ENCODE measurements at regions of chr1 and their contacts with region 1.

Region 1: DNA sequence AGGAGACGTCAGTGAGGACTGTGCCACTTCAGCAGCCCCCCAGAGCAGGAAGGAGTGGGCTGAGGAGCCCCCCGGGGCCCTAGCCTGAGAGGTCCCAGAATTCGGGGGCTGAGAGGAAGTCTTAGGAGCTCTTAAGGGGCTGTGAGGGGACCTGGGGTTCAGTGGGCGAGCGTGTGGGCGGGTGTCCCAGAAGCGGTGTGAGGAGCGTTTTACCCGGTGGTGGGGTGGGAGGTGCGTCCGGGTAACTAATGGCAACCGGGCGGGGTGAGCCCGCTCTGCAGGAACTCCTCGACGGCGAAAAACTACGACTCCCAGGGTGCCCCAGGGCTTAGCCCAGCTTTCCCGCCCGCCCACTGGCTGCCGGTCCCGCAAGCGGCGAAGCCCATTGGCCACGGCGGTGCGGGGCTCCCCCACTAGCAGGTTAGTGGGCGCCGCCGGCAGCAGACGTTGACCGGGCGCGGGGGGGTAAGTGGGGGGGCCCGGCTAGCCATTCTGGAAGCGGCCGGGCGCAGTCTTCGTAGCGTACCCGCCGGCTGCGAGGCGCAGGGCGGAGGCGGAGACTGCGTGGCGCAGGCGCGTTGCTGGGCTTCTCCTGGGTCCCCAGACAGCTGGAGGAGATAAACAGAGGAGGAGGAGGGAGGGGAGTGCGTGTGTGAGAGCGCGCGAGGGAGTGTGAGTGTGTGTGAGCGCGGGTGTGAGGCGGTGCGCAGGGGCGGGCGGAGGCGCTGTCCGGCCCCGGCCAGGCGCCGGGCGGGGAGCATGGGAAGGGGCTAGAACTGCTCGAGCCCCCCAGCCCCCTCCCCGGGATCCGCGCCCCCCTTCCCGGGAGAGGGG is at the start of gene WDTC1:
- DNase-seq: peak; percentile 99
- H3K4me3 Mint-ChIP-seq: peak within 1 kb of the TSS; percentile 91
- H3K27ac Mint-ChIP-seq: peak within 1 kb of the TSS; percentile 86
- H3K4me1 Mint-ChIP-seq: peaks cover 29% of the 10 kb centered on the region
- H3K27me3 Mint-ChIP-seq: no peaks in the 10 kb centered on the region
- total RNA-seq, gene WDTC1: 30.3 TPM

Region 2: DNA sequence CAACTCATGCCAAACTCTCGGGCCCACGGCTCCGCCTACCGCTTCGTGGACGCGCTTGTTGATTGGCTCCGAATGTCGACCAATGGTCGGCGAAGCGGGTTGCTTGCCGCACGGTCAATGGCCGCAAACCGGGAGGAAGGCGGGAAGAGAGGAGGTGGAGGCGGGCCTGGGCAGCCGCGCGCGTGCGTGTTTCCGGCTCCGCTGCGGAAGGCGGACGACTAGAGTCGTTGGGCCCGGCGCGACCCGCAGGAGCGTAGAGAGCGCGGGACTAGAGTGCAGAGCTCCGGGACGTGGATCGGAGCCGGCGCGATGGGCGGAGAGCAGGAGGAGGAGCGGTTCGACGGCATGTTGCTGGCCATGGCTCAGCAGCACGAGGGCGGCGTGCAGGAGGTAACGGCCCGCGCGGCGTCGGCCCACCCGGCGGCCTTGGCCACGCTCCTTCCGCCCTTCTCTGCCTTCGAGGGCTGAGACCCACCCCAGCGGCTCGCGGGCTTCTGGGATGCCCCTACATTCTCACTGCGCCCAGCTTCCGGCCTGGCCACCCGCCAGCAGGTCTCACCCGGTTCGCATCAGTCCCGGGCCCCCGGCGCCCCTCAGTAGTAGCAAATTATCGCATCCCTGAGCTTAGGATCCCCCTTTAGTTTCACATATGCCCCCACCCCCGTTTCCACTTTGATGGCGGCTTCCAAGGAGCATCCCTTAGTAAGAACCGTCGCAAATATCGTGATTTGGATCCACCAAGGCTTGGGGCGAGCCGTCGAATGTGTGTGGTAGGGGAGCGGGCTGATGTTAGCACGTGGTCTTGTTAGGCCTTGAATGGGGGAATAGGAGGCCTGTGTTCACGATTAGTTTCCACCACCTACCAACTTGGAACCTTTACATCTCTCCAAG is 312.5 kb before region 1 on chr1 and contains the start of gene NUDC:
- CTCF ChIA-PET with region 1: no interaction called
- POLR2A ChIA-PET with region 1: interaction called, 3 read pairs
- intact Hi-C with region 1: loop called (anchors 2 kb)
- DNase-seq: peak; percentile 98
- H3K4me3 Mint-ChIP-seq: peak within 1 kb of the TSS; percentile 98
- H3K27ac Mint-ChIP-seq: peak within 1 kb of the TSS; percentile 93
- H3K4me1 Mint-ChIP-seq: peaks cover 36% of the 10 kb centered on the region
- H3K27me3 Mint-ChIP-seq: no peaks in the 10 kb centered on the region
- total RNA-seq, gene NUDC: 90.8 to 97.1 TPM

Region 3: DNA sequence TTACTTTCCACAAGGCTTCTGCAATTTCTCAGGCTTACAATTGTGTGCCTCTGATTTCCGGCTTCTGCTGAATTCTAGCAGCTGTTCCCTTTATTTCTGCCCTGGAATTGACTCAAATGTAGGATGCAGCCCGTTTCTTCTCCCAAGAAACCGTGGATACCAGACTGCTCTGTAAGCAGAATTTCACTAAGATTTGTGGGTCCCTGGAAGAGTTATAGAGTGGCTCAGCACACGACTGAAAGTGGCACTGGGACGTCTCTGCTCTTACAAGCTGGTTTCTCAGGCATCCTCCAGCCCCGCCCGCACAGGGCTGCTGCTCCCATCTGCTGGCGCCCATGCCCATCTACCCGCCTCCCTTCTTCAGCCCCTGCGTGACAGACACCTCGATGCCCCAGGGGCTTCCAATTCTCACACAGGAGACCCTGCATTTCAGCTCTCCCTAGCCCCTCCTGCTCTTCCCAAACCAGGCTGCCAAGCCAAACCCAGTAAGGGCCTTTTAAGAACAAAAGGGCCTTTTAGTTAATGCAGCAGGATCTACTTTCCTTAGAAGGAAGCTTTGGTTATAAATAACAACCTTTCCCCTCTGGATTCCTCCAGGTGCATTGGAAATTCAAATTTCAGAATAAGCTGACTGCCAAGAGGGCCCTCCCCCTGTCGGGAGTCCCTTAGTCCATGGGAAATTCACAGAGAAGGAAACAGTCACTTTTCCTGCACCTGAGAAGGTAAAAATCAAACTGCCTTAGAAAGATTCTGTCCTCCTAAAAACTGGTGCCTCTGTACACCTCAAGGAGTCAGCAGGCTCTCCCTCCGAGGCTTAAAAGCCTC is 176.3 kb before region 1 on chr1:
- CTCF ChIA-PET with region 1: no interaction called
- POLR2A ChIA-PET with region 1: no interaction called
- intact Hi-C with region 1: no loop called
- DNase-seq: no peak
- H3K4me3 Mint-ChIP-seq: no peak overlapping the region
- H3K27ac Mint-ChIP-seq: no peak overlapping the region
- H3K4me1 Mint-ChIP-seq: no peaks in the 10 kb centered on the region
- H3K27me3 Mint-ChIP-seq: no peaks in the 10 kb centered on the region

Region 4: GRCh38 chr1:27253596-27253995 is 19.3 kb after region 1 on chr1:
- CTCF ChIA-PET with region 1: interaction called, 3 read pairs
- POLR2A ChIA-PET with region 1: interaction called, 4 read pairs
- intact Hi-C with region 1: loop called (anchors 2 kb)
- DNase-seq: no peak
- H3K4me3 Mint-ChIP-seq: peak overlapping the region; percentile 62
- H3K27ac Mint-ChIP-seq: peak overlapping the region; percentile 83
- H3K4me1 Mint-ChIP-seq: peaks cover 32% of the 10 kb centered on the region
- H3K27me3 Mint-ChIP-seq: no peaks in the 10 kb centered on the region

Region 5: DNA sequence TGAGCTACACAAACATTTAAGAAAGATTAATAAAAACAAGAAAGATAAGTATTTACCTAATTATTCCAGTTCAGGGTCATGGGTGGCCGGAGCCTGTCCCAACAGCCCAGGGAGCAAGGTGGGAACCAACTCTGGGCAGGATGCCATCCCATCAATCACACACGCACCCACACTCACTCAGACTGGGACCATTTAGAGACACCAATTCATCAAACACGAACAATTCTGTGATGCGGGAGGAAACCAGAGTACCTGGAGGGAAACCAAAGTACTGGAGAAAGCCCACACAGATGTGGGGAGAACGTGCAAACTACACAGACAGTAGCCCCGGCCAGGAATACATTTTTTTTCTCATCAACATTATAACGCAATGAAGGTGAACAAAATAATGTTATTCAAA is 239.5 kb after region 1 on chr1:
- CTCF ChIA-PET with region 1: no interaction called
- POLR2A ChIA-PET with region 1: no interaction called
- intact Hi-C with region 1: no loop called
- DNase-seq: peak; percentile 25
- H3K4me3 Mint-ChIP-seq: no peak overlapping the region
- H3K27ac Mint-ChIP-seq: peak overlapping the region; percentile 69
- H3K4me1 Mint-ChIP-seq: peaks cover 79% of the 10 kb centered on the region
- H3K27me3 Mint-ChIP-seq: no peaks in the 10 kb centered on the region

Region 6: GRCh38 chr1:27489910-27490741 is 255.9 kb after region 1 on chr1 and contains the start of gene WASF2:
- CTCF ChIA-PET with region 1: no interaction called
- POLR2A ChIA-PET with region 1: no interaction called
- intact Hi-C with region 1: loop called (anchors 10 kb)
- DNase-seq: peak; percentile 98
- H3K4me3 Mint-ChIP-seq: peak within 1 kb of the TSS; percentile 96
- H3K27ac Mint-ChIP-seq: peak within 1 kb of the TSS; percentile 99
- H3K4me1 Mint-ChIP-seq: peaks cover 28% of the 10 kb centered on the region
- H3K27me3 Mint-ChIP-seq: no peaks in the 10 kb centered on the region
- total RNA-seq, gene WASF2: 109 to 110 TPM